ENCODE measurements at regions of chr5 and their contacts with region 1.

Region 1: DNA sequence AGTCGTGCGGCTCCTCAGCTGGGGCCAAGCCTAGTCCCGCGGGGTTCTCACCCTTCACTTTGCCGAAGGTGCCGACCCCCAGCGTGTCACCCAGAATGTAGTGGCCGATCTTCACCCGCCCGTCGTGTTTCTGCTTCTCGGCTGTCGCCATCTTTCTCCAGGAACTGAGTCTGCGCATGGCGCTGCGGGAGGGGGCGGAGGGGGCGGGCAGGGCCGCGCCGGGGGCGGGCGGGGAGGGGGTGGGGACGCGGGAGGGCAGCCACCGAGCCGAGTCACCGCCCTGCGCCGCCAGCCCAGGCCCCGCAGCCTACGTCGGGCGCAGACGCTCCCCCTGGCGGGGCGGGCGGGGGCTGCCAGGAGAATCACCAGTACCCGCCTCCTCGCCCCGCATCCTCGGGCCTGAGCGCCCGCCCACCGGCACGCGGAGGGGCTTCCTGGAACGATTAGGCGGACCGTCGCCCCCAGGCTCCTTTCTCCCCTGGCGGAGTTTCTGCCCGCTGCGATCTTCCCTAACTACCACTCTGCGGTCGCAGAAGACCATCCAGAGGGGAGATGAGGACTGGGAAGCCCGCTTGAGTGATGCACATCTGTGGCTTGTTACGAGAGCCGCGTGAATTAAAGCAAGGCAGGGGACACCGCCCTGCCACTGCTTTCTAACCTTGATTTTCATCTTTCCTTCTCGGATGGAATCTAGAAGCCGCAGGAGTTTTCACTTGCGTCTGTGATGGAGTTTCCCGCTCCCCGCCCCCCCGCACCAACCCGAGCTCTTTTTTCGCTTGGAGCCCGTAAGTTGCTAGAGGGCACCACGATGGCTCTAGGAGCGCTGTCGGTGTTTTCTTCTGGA is at the start of gene PRKAA1:
- H3K4me3 Mint-ChIP-seq: peak within 1 kb of the TSS; percentile 83
- H3K27ac Mint-ChIP-seq: peak within 1 kb of the TSS; percentile 82
- H3K4me1 Mint-ChIP-seq: peaks cover 21% of the 10 kb centered on the region
- H3K27me3 Mint-ChIP-seq: peaks cover 3% of the 10 kb centered on the region

Region 2: DNA sequence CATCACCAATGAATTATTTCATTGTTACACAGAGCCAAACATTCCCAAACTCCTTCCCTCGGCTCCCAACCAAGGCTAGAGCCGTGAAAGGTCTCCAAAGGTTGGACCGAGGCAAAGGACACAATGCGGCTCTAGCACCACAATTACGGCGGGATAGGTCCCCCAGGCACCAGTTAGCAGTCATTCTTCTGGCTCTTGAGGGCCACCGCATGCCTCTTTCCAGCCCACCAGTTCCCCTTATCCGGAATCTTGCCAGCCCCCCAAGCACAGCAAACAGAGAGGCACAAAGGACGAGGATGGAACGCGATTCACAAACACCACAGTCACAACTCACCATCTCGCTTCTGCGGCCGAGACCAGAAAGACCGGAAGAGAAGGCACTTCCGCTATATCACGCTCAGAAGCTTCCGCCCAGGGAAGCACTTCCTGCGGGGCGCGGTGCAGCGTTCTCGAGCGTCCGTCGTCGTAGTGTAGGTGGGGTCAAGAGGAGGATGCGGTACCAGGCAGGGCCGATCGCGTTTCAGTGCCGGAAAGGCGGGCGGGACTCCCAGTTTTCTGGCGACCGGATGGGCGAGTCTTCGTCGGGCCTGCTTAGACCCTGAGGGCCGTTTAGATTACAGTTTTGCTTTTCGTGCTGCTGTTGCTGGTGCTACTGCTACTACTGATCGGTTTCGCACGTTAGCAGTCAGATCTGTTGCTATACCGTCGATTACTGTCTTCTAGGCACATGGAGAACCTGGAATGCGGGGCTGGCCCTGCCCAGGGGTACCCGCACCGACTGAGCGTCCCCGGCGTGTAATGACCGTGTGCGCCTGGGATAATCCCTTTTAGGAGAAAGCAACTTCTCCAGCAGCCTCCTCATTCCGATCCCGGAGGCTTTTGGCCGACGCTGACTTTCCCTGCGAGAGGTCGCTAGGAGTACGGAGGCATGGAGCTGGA is 36.9 kb after region 1 on chr5 and contains the start of gene RPL37:
- intact Hi-C with region 1: loop called (anchors 1 kb)
- H3K4me3 Mint-ChIP-seq: peak within 1 kb of the TSS; percentile 97
- H3K27ac Mint-ChIP-seq: peak within 1 kb of the TSS; percentile 98
- H3K4me1 Mint-ChIP-seq: peaks cover 39% of the 10 kb centered on the region
- H3K27me3 Mint-ChIP-seq: peaks cover 2% of the 10 kb centered on the region